Activated naive CD4-positive, alpha-beta T cell treated with anti-CD3 and anti-CD28 coated beads for 36 hours (primary cell): ENCODE measurements at regions of chr11 and their contacts with region 1.

Region 1: GRCh38 chr11:124837491-124837856 is 27.8 kb upstream of the ROBO3 start:
- DNase-seq: peak; percentile 20
- H3K4me3 Mint-ChIP-seq: no peak overlapping the region
- H3K27ac Mint-ChIP-seq: no peak overlapping the region
- H3K4me1 Mint-ChIP-seq: peaks cover 20% of the 10 kb centered on the region
- H3K27me3 Mint-ChIP-seq: peaks cover 54% of the 10 kb centered on the region

Region 2: DNA sequence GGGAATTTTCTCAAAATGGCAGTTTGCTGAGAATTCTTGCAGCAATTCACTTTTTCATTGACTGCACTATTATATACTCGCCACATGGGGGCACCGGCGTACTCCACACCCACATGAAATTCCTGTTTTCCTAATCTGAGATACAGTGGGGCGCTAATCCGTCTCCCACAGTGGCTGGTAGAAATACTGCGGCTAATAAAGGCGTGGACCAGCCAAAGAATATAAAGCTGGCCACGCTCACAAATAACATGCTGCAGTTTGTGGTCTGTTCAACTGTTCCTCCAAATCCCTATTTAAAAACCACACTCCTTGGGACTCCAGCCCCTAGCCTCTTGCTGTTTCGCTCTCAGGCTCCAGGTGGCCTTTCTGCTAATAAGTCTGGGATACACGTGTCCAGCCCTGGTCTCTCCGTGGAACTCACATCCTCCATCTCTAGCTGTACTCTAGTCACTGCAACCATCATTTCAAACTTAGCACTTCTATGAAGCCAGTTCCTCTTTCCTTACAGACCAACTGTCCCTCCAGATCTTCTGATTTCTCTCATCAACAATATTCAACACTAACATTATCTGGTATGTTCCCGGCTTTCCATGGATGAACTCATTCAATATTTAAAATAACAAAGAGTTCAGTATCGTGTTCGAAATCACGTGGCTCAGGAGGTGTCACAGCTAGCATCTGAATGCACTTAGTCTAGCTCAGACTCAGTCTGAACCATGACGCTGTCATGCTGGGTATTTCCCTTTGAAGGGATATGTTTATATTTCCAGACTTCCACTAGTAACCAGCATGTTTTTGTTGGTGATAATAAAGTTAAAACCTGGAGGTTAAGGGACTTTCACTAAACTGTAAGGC is 192.8 kb before region 1 on chr11:
- CTCF ChIA-PET with region 1: interaction called, 4 read pairs
- intact Hi-C with region 1: loop called (anchors 1 kb)
- DNase-seq: peak; percentile 26
- H3K4me3 Mint-ChIP-seq: no peak overlapping the region
- H3K27ac Mint-ChIP-seq: no peak overlapping the region
- H3K4me1 Mint-ChIP-seq: no peaks in the 10 kb centered on the region
- H3K27me3 Mint-ChIP-seq: no peaks in the 10 kb centered on the region

Region 3: DNA sequence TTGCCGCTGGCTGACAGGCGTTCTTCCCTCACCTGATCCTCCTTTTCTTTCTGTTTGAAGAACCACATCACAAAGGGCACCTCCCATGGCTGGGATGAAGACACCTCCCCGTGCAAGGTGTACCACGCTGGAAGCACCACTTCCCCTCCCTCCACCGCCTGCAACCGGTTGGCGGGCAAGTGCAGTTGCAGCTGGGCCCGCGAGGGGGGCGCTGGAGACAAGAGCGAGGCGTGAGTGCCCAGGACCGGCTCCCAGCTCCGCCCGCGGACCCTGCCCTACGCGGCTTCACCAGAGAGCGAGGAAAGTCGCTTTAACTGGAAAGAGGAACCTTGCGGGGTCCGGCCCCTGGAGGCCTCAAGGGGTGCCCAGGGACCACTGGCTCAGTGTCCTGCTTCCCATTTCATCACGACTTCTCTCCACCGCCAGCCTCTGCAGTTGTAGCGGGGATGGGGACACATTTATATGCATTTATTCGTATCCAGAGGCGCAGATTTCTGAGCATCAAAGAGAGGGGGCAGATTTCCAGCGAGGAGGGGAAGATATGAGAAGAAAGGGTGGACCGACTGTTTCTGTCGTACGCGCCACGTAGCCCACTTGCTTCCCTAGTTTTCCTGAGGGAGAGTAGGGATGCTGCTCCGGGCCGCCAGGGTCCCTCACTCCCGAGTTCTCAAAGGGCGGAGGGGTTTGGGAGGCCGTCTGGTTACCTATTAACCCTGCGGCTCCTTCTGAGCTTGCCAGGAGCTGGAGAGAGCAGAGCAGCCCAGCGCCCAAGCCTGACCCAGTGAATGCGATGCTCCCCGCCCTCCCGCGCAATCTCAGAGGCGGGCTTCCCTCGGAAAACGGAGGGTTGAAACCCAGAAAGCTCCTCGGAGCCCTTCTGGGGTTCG is 78.9 kb before region 1 on chr11:
- CTCF ChIA-PET with region 1: interaction called, 22 read pairs
- intact Hi-C with region 1: loop called (anchors 1 kb)
- DNase-seq: peak; percentile 80
- H3K4me3 Mint-ChIP-seq: peak overlapping the region; percentile 56
- H3K27ac Mint-ChIP-seq: no peak overlapping the region
- H3K4me1 Mint-ChIP-seq: peaks cover 30% of the 10 kb centered on the region
- H3K27me3 Mint-ChIP-seq: peaks cover 45% of the 10 kb centered on the region

Region 4: DNA sequence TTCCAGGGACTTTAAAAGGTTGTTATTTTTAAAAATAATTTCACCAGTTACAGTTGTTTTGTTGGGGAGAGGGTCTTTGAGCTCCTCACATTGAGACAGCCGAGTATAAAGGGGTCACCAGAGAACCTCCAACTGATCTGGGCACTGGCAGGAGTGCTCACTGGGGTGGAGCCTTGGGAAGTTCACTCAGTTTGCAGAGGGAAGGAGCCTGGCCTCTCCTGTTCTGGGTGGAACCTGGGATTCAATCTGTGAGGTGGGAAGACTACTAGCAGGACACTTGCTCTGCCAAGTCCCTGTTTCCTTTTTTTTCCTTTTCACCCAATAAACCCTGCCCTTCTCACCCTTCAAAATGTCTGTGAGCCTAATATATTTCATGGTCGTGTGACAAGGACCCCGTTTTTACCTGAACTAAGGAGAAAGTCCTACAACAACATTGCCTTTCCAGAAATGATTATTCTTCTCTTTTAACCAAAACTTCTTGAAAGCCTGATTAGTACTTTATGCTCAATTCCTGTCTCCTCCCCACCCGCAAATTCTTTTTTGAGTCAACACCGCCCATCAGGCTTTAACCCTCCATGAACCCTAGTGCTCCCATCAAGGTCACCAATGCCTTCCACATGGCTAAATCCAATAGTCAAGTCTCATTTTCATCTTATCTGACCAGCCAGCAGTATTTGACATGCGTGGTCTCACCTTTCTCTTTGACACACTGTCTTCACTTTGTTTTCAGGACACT is 15.3 kb before region 1 on chr11:
- CTCF ChIA-PET with region 1: no interaction called
- intact Hi-C with region 1: no loop called
- DNase-seq: no peak
- H3K4me3 Mint-ChIP-seq: no peak overlapping the region
- H3K27ac Mint-ChIP-seq: no peak overlapping the region
- H3K4me1 Mint-ChIP-seq: no peaks in the 10 kb centered on the region
- H3K27me3 Mint-ChIP-seq: peaks cover 31% of the 10 kb centered on the region

Region 5: DNA sequence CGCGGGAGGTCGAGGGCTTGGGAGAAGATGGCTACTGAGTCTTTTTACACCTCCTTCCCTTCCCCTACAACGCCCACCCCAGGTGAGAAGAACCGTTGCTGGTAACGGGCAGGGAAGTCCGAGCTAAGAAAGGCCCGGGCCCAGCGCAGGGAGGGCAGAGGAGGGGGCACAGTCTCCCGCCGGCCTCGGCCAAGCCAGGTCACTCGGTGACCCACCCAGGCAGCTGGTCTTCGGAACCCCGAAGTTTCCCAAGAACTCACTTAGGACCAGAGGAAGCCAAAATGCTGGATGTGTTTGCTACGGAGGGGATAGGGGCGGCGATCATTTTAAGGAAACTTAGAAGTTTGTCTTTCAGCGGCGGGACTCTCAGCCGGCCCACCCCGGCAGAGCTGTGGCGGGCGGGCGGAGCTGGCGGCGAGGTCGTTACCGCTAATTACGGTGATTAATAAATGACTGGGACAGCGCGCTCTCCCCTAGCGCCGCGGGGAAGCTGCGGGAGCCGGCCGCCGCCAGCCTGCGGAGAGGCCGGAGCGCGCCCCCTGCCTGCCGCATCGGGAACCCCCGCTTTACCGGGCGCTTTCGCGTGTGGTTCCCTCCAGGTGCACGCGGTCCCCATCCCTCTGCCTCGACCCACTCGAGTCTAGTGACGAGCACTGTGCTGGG is 28.6 kb after region 1 on chr11:
- CTCF ChIA-PET with region 1: interaction called, 47 read pairs
- intact Hi-C with region 1: loop called (anchors 1 kb)
- DNase-seq: peak; percentile 62
- H3K4me3 Mint-ChIP-seq: peak overlapping the region; percentile 42
- H3K27ac Mint-ChIP-seq: no peak overlapping the region
- H3K4me1 Mint-ChIP-seq: peaks cover 37% of the 10 kb centered on the region
- H3K27me3 Mint-ChIP-seq: peaks cover 92% of the 10 kb centered on the region

Region 6: DNA sequence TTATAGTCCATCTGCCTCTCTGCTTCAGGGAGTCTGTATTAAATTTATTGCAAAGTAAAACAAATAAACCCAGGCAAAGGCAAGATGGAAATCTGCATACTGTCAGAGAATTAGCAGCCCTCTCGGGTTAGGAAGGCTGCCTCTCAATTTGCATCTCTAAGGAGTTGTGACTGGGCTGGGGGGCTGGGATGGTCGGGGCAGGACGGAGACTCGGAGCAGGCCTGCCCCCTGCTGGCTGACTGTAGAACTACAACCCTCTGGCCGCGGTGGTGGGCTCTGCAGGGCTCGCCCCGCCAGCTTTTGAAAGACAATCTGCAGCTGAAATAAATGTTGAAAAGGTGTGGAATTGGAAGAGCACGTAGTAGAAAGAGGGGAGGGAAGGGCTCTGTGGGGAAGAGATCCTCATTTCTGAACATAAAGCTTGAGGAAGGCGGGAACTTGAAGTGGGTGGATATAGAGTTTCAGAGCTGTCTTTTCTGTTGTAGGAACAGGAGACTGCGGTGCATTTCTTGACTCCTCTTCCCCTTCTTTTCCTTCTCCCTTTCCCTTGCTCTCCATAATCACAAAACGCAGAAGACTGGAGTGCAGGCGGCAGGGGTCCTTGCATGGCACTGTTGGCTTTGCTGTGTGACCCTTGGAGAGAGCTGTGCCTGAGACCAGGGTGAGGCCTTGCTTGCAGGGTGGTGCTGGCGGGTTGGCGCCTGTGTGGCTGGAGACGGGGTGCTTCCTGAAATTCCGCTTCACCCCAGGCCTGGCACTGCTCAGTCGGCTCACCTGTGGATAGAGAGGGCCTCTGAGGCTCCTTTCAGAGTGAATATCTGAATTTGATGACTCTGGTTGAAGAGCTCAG is 304.4 kb after region 1 on chr11:
- CTCF ChIA-PET with region 1: interaction called, 6 read pairs
- intact Hi-C with region 1: loop called (anchors 1 kb)
- DNase-seq: peak; percentile 46
- H3K4me3 Mint-ChIP-seq: no peak overlapping the region
- H3K27ac Mint-ChIP-seq: no peak overlapping the region
- H3K4me1 Mint-ChIP-seq: peaks cover 3% of the 10 kb centered on the region
- H3K27me3 Mint-ChIP-seq: peaks cover 15% of the 10 kb centered on the region